HepG2 (cell line): ENCODE measurements at regions of chr1 and their contacts with region 1.

Region 1: DNA sequence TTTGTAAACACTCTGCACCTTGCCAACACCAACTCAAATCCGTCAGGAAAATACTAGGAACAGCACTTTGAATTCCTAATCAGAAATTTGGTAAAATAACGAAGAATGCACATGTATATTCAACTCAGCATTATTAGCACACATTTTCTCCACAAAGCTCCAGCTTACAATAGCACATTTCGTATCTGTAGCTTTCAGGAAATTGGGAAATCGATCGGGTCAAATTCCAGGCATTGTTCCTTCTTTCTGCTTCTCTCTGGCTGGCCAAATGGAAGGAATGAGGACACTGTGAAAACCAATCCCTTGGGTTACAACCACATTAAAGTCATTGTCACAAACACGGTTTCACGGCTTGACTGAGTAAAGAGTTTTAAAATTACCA is 58.6 kb downstream of the NPHP4 start:
- DNase-seq: peak; percentile 87
- ATAC-seq: peak; percentile 88
- H3K4me3 ChIP-seq: peak overlapping the region in 1 of 3 experiments; percentile 24; a peak in 1 of 6 replicates
- H3K27ac ChIP-seq: peak overlapping the region; percentile 90
- H3K4me1 ChIP-seq: peaks cover 42% of the 10 kb centered on the region
- H3K27me3 ChIP-seq: no peaks in the 10 kb centered on the region
- CTCF ChIP-seq: no peak
- EP300 ChIP-seq: peak in 1 of 2 experiments; percentile 64; a peak in 1 of 4 replicates
- POLR2A ChIP-seq: peak in 1 of 2 experiments; percentile 46; a peak in 1 of 4 replicates
- RAD21 ChIP-seq: no peak

Region 2: GRCh38 chr1:5949085-5949760 is 15.6 kb after region 1 on chr1:
- CTCF ChIA-PET with region 1: no interaction called
- POLR2A ChIA-PET with region 1: interaction called, 15 read pairs
- in situ Hi-C with region 1: no loop called
- intact Hi-C with region 1: no loop called
- DNase-seq: peak; percentile 88
- ATAC-seq: peak; percentile 98
- H3K4me3 ChIP-seq: no peak overlapping the region; a peak in 1 of 6 replicates
- H3K27ac ChIP-seq: peak overlapping the region; percentile 82
- H3K4me1 ChIP-seq: peaks cover 41% of the 10 kb centered on the region
- H3K27me3 ChIP-seq: no peaks in the 10 kb centered on the region
- CTCF ChIP-seq: peak; percentile 61
- EP300 ChIP-seq: peak in 1 of 2 experiments; percentile 43; a peak in 1 of 4 replicates
- POLR2A ChIP-seq: no peak
- RAD21 ChIP-seq: no peak

Region 3: DNA sequence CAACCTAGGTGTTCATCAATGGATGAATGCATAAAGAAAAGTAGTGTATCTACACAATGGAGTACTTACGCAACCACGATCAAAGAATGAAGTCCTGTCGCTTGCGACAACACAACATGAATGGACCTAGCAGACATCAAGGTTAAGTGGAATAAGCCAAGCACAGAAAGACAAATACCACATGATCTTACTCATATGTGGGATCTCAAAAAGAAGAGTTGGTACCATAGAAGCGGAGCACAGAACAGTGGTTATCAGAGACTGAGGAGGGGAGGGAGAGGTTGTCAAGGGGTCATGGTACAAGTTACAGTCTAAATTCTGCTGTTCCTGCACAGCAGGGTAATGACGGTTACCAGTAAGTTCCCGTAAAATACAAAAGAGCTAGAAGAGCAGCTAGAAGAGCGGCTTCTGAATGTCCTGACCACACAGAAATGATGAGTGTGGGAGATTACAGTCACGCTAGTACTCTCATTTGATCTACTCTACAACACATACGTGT is 21.9 kb after region 1 on chr1:
- CTCF ChIA-PET with region 1: no interaction called
- POLR2A ChIA-PET with region 1: interaction called, 16 read pairs
- in situ Hi-C with region 1: no loop called
- intact Hi-C with region 1: no loop called
- DNase-seq: peak; percentile 100
- ATAC-seq: peak; percentile 94
- H3K4me3 ChIP-seq: peak overlapping the region in 1 of 3 experiments; percentile 8; a peak in 1 of 6 replicates
- H3K27ac ChIP-seq: peak overlapping the region; percentile 92
- H3K4me1 ChIP-seq: peaks cover 56% of the 10 kb centered on the region
- H3K27me3 ChIP-seq: no peaks in the 10 kb centered on the region
- CTCF ChIP-seq: no peak
- EP300 ChIP-seq: peak; percentile 85 to 98; a peak in 3 of 4 replicates
- POLR2A ChIP-seq: peak in 1 of 2 experiments; percentile 52; a peak in 1 of 4 replicates
- RAD21 ChIP-seq: no peak